Gastrocnemius medialis (tissue), 4 donors: ENCODE measurements at regions of chr7 and their contacts with region 1.

Region 1: GRCh38 chr7:68875857-68876256 is 722.4 kb upstream of the AUTS2 start:
- DNase-seq: no peak
- ATAC-seq: no peak
- H3K4me3 ChIP-seq: no peak overlapping the region
- H3K27ac ChIP-seq: no peak overlapping the region
- H3K4me1 ChIP-seq: no peaks in the 10 kb centered on the region
- H3K27me3 ChIP-seq: no peaks in the 10 kb centered on the region
- CTCF ChIP-seq: no peak
- POLR2A ChIP-seq: no peak

Region 2: DNA sequence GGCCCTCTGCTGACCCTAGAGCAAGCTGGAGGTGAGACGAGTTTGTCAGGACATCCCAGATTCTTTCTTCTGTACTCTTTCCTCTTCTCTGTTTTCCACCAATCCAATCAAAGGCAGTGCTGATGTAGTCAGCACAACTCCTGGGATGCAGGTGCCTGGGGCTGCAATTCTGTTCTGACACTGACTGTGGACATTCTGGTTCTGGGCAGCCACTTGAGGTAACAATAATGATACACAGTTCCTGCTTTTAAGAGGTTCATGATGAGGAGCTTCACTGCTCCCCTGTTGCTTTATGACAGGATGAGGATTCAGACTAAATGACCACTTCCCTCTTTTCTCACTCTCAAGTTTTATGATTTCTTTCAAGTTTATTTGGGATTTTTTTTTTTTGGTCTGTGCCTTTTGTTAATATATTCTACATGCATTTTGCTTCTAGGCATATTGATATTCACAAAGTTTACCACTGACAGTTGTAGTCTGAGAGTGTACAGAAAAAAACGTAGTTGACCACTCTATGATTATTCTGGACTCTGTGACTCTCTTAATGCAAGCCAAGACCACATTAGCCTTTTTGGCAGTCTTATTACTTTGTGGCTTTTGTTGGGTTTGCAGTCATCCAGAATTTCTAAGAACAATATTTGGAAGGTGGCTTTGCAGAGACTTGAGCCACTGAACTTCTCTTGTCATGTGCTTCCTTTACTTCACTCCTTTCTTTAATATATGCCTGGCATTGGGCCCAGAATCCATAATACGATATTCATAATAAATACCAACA is 970.1 kb after region 1 on chr7:
- in situ Hi-C with region 1: no loop called
- intact Hi-C with region 1: loop called (anchors 5 kb)
- DNase-seq: no peak
- ATAC-seq: no peak
- H3K4me3 ChIP-seq: no peak overlapping the region
- H3K27ac ChIP-seq: no peak overlapping the region
- H3K4me1 ChIP-seq: peaks cover 0 to 9% of the 10 kb centered on the region in 2 donors
- H3K27me3 ChIP-seq: no peaks in the 10 kb centered on the region
- CTCF ChIP-seq: no peak
- POLR2A ChIP-seq: no peak